A549 (cell line): ENCODE measurements at regions of chr10 and their contacts with region 1.

Region 1: DNA sequence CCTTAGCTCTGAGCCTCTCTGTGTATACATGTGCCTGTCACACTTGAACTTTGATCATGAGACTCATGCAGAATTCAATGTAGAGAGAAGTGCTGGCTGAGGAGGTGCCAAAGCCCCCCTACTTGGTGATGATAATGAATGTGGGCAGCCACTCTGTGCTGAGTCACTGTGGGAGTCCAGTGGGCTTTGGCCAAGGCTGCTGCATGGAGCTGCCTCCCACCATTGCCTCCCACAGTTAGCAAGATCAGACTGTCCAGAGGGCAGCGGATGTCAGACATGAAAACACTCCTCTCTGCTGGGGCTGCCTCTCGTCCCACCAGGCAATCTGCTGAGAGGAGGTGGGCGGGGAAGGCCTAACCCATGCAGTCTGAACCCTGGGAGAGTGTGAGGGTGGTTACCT is 180.3 kb downstream of the SH2D4B start:
- DNase-seq: no peak
- ATAC-seq: no peak
- H3K4me3 ChIP-seq: no peak overlapping the region
- H3K27ac ChIP-seq: no peak overlapping the region
- H3K4me1 ChIP-seq: no peaks in the 10 kb centered on the region
- CTCF ChIP-seq: no peak
- EP300 ChIP-seq: no peak
- POLR2A ChIP-seq: no peak
- RAD21 ChIP-seq: no peak

Region 2: DNA sequence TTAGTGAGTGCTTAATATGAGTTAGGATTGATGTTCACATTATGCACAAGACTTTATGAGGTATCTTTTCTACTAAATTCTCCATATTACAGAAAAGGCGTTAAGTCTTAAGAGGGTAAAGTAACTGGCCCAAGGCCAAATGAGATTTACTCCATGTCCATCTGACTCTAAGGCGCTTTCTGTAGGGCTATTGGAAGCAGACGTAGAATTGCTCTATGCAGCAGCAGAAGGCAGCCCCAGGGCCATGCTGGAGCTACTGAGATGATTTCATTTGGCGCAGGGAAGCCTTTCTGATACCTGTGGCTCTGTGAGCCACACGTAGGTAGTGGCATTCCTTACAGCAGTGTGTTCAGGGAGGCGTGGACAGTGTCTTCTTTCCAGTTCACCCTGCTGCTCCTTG is 47.3 kb before region 1 on chr10:
- CTCF ChIA-PET with region 1: no interaction called
- POLR2A ChIA-PET with region 1: no interaction called
- DNase-seq: no peak
- ATAC-seq: no peak
- H3K4me3 ChIP-seq: no peak overlapping the region
- H3K27ac ChIP-seq: no peak overlapping the region
- H3K4me1 ChIP-seq: no peaks in the 10 kb centered on the region
- CTCF ChIP-seq: no peak
- EP300 ChIP-seq: no peak
- POLR2A ChIP-seq: no peak
- RAD21 ChIP-seq: no peak

Region 3: GRCh38 chr10:80699602-80700039 is 18.4 kb before region 1 on chr10:
- CTCF ChIA-PET with region 1: interaction called, 26 read pairs
- POLR2A ChIA-PET with region 1: no interaction called
- DNase-seq: peak; percentile 59 to 73
- ATAC-seq: peak; percentile 87 to 97
- H3K4me3 ChIP-seq: no peak overlapping the region
- H3K27ac ChIP-seq: no peak overlapping the region
- H3K4me1 ChIP-seq: no peaks in the 10 kb centered on the region
- CTCF ChIP-seq: peak; percentile 81
- EP300 ChIP-seq: no peak
- POLR2A ChIP-seq: no peak
- RAD21 ChIP-seq: peak; percentile 81 to 86